ENCODE measurements at regions of chr11 and their contacts with region 1.

Region 1: DNA sequence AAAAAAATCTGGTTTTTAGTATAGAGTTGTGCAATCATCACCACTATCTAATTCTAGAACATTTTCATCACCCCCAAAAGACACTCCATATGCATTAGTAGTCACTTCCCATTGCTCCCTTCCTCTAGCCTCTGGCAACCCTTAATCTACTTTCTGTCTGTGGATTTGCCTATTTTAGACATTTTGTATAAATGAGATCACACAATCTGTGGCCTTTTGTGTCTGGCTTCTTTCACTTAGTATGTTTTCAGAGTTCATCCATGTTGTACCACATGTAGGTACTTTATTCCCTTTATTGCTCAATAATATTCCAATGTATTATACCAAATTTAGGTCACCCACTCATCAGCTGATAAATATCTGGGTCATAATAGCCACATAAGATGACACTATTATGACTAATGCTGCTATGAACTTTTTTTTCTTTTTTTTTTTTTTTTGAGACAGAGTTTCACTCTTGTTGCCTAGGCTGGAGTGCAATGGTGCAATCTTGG is 67.5 kb upstream of the SCUBE2 start:
- DNase-seq: no peak
- ATAC-seq: no peak
- H3K4me3 ChIP-seq: no peak overlapping the region
- H3K27ac ChIP-seq: no peak overlapping the region
- H3K4me1 ChIP-seq: peaks cover 4 to 5% of the 10 kb centered on the region in 2 experiments; a peak in 3 of 5 replicates
- H3K27me3 ChIP-seq: no peaks in the 10 kb centered on the region
- CTCF ChIP-seq: no peak
- EP300 ChIP-seq: no peak
- POLR2A ChIP-seq: no peak
- RAD21 ChIP-seq: no peak

Region 2: GRCh38 chr11:9396752-9397151 is 237.8 kb after region 1 on chr11:
- CTCF ChIA-PET with region 1: no interaction called
- POLR2A ChIA-PET with region 1: no interaction called
- in situ Hi-C with region 1: loop called (anchors 25 kb)
- intact Hi-C with region 1: no loop called
- DNase-seq: no peak
- ATAC-seq: no peak
- H3K4me3 ChIP-seq: no peak overlapping the region
- H3K27ac ChIP-seq: no peak overlapping the region; the same call in 2 of the 3 replicates
- H3K4me1 ChIP-seq: peaks cover 4 to 11% of the 10 kb centered on the region in 2 experiments; a peak in 3 of 5 replicates
- H3K27me3 ChIP-seq: no peaks in the 10 kb centered on the region
- CTCF ChIP-seq: no peak
- EP300 ChIP-seq: no peak
- POLR2A ChIP-seq: no peak
- RAD21 ChIP-seq: no peak

Measured in K562 (cell line).